Activated naive CD4-positive, alpha-beta T cell treated with anti-CD3 and anti-CD28 coated beads for 36 hours (primary cell): ENCODE measurements at regions of chr3 and their contacts with region 1.

Region 1: DNA sequence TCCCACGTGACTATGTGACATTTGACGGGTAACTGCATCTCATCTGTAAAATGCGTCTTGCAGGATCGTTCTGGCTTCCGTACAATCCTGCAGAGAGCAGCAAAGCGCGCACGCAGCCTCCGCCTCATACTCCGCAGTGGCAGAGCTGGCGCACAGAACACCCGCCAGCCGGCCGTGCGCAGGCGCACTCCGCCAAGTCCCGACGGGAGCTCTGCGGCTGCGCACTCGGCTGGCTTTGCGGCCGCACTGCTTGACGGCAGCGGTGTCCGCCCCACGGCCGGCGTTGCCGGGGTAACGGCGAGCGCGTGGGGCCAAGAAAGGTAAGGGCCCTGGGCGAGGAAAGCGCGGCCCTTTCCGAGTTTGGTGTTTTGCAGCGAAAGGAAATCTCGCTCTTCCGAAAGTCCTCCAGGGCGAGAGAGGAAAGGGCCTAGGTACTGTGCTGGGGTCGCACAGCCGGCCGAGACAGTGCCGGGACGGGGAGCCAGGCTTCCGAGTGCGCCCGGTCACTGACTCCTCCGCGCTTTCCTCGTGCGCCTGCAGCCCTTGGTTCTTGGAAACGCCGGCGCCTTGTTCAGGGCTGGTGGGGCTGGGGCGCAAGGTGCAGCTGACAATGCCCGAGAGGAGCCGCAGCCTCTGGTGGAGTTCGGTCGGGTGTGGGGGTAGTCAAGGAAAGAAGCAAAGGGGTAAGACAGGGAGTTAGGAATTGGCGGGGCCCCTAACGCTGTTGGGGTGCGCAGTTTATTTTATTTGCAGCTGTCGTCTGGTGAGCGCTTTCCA is at the start of gene TSEN2:
- DNase-seq: peak; percentile 95
- H3K4me3 Mint-ChIP-seq: peak within 1 kb of the TSS; percentile 93
- H3K27ac Mint-ChIP-seq: peak within 1 kb of the TSS; percentile 82
- H3K4me1 Mint-ChIP-seq: peaks cover 44% of the 10 kb centered on the region
- H3K27me3 Mint-ChIP-seq: no peaks in the 10 kb centered on the region
- total RNA-seq, gene TSEN2: 14.0 to 14.8 TPM

Region 2: GRCh38 chr3:11846281-11847034 is 637.9 kb before region 1 on chr3 and contains the start of gene TAMM41:
- CTCF ChIA-PET with region 1: interaction called, 5 read pairs
- intact Hi-C with region 1: loop called (anchors 1 kb)
- DNase-seq: peak; percentile 95
- H3K4me3 Mint-ChIP-seq: peak within 1 kb of the TSS; percentile 97
- H3K27ac Mint-ChIP-seq: peak within 1 kb of the TSS; percentile 80
- H3K4me1 Mint-ChIP-seq: peaks cover 26% of the 10 kb centered on the region
- H3K27me3 Mint-ChIP-seq: no peaks in the 10 kb centered on the region
- total RNA-seq, gene TAMM41: 19.3 to 21.4 TPM

Region 3: DNA sequence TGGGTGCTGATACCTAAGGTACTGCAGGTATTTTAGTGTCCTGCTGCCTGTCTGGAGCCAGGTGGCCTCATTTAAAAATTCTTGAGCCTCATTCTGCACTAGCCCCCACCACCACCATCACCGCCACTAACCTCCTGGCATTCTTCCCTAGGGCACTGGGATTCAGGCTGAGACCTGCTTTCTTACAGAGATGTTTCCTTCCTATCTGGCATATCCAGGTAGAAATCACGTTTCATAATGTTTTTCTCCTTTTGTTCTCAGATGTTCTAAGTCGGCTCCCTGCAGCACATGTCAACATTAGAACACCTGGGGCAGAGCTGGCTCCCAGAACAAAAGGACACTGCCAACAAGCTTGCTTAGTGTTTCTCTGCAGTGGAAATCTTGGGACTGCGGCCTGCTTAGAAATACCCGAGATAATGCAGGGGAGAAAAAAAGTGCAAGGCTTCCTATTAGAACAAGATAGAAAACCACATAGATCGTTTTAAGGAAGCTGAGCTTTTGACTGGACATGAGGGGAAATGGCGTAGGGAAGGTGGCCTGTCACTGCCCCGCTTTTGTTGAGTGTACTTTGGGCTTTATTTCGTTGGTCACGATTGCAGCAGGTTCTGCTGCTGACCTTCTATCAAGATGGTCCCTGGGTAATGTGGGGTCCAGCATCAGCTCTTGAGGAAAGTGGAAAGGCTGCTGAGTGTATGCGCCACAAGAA is 255.1 kb before region 1 on chr3:
- CTCF ChIA-PET with region 1: no interaction called
- intact Hi-C with region 1: no loop called
- DNase-seq: no peak
- H3K4me3 Mint-ChIP-seq: no peak overlapping the region
- H3K27ac Mint-ChIP-seq: no peak overlapping the region
- H3K4me1 Mint-ChIP-seq: peaks cover 12% of the 10 kb centered on the region
- H3K27me3 Mint-ChIP-seq: peaks cover 18% of the 10 kb centered on the region

Region 4: GRCh38 chr3:12287727-12288191 is 196.6 kb before region 1 on chr3:
- CTCF ChIA-PET with region 1: no interaction called
- intact Hi-C with region 1: loop called (anchors 2 kb)
- DNase-seq: peak; percentile 9
- H3K4me3 Mint-ChIP-seq: peak overlapping the region; percentile 50
- H3K27ac Mint-ChIP-seq: no peak overlapping the region
- H3K4me1 Mint-ChIP-seq: peaks cover 5% of the 10 kb centered on the region
- H3K27me3 Mint-ChIP-seq: peaks cover 46% of the 10 kb centered on the region

Region 5: DNA sequence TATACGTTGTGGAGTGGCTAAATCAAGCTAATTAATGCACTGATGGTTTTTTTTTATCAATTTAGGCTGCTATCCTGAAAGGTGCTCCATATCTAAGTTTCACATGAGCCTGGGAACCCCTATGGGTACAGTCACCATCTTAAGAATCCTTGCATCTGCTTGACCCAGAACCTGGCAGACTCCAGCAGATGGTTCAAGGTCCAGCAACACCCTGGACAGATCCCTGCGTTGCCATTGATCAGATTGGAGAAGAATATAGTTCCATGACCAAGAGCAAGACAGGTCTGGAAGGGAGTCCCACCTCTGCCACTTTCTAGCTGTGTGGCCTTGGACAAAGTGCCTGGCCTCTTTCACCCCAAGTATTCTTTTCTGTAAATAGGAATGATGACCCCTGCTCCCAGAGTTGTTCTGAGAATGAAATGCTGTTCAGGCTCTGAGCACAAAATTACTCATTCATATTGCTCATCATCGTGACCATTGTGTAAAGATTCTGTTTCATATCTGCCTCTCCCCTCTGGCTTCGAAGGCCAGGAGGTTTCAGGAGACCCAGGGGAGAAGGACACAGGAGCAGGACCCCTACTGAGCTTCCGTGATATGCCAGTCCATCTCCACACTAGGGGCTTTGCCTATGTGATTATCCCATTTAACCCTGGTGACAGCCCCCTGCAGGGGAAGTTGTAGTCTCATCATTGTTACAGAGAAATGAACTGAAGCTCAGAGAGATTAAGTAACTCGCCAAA is 30.1 kb before region 1 on chr3:
- CTCF ChIA-PET with region 1: no interaction called
- intact Hi-C with region 1: no loop called
- DNase-seq: no peak
- H3K4me3 Mint-ChIP-seq: no peak overlapping the region
- H3K27ac Mint-ChIP-seq: no peak overlapping the region
- H3K4me1 Mint-ChIP-seq: no peaks in the 10 kb centered on the region
- H3K27me3 Mint-ChIP-seq: no peaks in the 10 kb centered on the region

Region 6: GRCh38 chr3:12556671-12557472 is 72.5 kb after region 1 on chr3 and contains the start of gene MKRN2:
- CTCF ChIA-PET with region 1: interaction called, 3 read pairs
- intact Hi-C with region 1: loop called (anchors 1 kb)
- DNase-seq: peak; percentile 83
- H3K4me3 Mint-ChIP-seq: peak within 1 kb of the TSS; percentile 78
- H3K27ac Mint-ChIP-seq: peak within 1 kb of the TSS; percentile 88
- H3K4me1 Mint-ChIP-seq: peaks cover 48% of the 10 kb centered on the region
- H3K27me3 Mint-ChIP-seq: peaks cover 24% of the 10 kb centered on the region
- total RNA-seq, gene MKRN2: 32.9 to 34.5 TPM

Region 7: DNA sequence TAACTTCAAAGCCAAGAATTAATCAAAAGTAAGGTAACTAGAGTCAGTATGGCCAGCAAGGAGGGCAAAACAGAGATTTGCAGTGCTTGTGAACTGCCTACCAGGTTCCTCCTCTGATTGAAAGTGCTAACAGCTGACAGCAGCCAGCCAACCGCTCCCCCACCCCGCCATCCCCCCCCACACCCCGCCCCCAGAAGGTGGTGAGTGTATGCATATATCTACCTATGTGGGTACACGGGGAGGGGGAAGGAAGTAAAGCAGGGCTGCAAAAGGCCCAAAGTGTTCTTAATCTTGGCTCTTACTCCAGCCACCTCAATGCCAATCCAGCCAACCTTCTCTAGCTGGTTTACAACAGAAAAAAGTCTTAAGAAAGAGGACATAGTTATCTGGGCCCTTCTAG is 128.9 kb after region 1 on chr3:
- CTCF ChIA-PET with region 1: no interaction called
- intact Hi-C with region 1: no loop called
- DNase-seq: no peak
- H3K4me3 Mint-ChIP-seq: no peak overlapping the region
- H3K27ac Mint-ChIP-seq: no peak overlapping the region
- H3K4me1 Mint-ChIP-seq: peaks cover 40% of the 10 kb centered on the region
- H3K27me3 Mint-ChIP-seq: no peaks in the 10 kb centered on the region

Region 8: DNA sequence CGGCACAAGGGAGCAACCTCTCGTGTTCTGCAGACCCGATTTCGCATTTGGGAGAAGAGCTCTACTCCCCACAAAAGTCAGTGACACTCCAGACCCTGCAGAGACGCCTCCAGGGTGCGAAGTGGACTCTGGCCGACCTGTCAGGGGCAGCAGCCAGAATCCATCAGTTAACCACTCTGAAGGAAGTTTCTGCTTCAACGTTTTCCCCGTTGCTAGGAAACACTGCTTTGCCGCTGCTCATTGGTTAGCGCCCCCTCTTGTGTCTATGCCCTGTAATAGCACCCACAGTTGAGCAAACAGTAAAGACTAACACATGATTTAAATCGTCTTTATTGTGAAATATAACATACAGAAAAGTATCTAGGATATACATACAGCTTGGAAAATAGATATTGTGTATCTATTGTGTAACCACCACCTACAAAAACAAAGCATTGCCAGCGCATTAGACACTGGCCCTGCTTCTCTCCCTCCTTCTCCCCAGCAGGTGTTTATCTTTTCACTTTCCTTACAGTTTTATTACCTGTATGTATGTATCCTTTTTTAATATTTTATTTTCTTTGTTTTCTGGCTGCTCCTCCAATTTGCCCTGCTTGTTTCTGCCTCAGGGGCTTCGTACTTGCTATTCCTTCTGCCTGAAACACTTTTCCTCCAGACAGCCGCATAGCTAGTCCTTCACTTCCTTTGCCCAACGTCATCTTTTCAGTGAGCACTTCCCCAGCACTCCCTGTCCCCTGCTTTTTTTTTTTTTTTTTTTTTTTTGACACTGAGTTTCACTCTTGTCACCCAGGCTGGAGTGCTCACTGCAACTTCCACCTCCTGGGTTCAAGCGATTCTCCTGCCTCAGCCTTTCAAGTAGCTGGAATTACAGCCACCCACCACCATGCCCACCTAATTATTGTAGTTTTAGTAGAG is 235.9 kb after region 1 on chr3:
- CTCF ChIA-PET with region 1: interaction called, 3 read pairs
- intact Hi-C with region 1: loop called (anchors 1 kb)
- DNase-seq: peak; percentile 83
- H3K4me3 Mint-ChIP-seq: peak overlapping the region; percentile 56
- H3K27ac Mint-ChIP-seq: no peak overlapping the region
- H3K4me1 Mint-ChIP-seq: peaks cover 9% of the 10 kb centered on the region
- H3K27me3 Mint-ChIP-seq: no peaks in the 10 kb centered on the region

Region 9: DNA sequence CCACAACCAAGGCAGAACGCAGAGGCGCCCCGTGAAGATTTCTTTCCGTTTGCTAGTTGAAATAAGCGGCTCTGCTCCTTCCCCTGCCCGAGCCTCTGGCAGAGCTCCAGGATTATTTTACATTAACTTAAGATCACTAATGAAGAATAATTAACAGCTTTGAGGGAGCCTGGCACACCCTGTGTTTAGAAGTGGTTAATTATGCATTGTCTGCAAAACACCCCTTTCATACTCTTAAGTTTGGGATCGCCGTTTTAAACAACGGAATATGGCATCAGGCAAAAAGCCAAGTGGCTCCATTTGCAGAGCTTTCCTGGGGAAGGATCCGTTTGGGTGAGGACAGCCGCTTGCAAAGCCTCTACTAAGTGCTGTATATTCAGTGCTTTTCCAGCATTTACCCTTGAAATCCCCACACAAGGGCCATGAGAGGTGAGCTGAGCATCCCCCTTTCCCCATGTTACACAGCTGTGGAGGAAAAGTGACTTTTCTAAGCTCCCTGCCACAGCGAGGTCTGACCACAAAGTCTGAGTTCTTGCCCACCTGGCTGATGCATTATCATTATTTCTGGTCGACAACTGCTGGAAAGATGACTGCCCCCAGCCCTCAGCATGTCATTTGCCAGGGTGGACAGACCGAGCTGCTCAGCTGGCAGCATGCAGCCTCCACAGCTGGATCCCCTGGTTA is 555.0 kb after region 1 on chr3:
- CTCF ChIA-PET with region 1: no interaction called
- intact Hi-C with region 1: no loop called
- DNase-seq: no peak
- H3K4me3 Mint-ChIP-seq: no peak overlapping the region
- H3K27ac Mint-ChIP-seq: no peak overlapping the region
- H3K4me1 Mint-ChIP-seq: peaks cover 10% of the 10 kb centered on the region
- H3K27me3 Mint-ChIP-seq: no peaks in the 10 kb centered on the region